ENCODE measurements at regions of chr19 and their contacts with region 1.

Region 1: DNA sequence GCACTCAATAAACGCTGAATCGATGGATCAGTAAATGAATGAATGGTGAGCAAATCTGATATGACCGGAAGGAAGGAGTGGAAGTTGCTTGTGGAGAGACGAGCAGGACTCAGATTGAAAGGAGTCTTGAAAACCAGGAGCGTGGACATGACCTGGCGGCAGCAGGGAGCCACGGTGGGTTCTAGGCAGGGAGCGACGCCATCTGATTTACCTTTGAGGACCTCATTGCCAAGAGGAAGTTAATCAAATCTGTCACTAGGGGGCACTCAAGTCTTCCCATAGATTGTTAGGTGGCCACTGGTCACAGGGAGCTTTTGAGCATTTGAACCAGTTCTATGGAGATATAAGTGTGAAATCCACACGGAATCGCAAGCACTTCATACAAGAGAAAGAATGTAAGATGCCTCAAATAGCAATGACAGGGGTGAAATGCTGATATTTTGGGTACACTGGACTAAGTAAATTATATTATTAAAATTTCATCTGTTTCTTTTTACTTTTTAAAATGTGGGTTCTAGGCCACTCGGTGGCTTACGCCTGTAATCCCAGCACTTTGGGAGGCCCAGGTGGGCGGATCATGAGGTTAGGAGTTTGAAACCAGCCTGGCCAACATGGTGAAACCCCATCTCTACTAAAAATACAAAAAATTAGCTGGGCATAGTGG is 9.2 kb upstream of the FBN3 start:
- H3K4me3 ChIP-seq: no peak overlapping the region
- H3K27ac ChIP-seq: no peak overlapping the region
- H3K4me1 ChIP-seq: peaks cover 4% of the 10 kb centered on the region
- CTCF ChIP-seq: peak; percentile 38; the same call in 1 of the 2 replicates

Region 2: DNA sequence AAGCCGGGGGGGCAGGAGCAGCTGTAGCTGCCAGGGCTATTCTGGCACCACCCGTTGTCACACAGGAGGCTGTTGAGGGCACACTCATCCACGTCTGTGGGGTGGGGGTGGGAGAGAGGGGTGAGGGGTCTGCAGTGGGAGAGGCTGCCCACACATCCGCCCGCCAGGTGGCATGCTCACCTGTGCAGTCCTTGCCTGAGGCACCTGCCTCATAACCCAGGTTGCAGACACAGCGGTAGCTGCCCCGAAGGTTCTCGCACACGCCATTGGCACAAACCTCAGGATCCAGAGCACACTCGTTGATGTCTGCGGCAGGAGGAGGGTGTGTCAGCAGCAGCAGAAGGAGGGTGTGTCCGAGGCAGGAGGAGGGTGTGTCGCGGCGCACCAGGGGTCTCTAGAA is 29.5 kb before region 1 on chr19:
- CTCF ChIA-PET with region 1: no interaction called
- POLR2A ChIA-PET with region 1: no interaction called
- H3K4me3 ChIP-seq: no peak overlapping the region
- H3K27ac ChIP-seq: no peak overlapping the region
- H3K4me1 ChIP-seq: peaks cover 2% of the 10 kb centered on the region; the same call in 1 of the 2 replicates
- CTCF ChIP-seq: no peak

Region 3: GRCh38 chr19:8224394-8225145 is 66.0 kb after region 1 on chr19:
- CTCF ChIA-PET with region 1: no interaction called
- POLR2A ChIA-PET with region 1: no interaction called
- H3K4me3 ChIP-seq: no peak overlapping the region
- H3K27ac ChIP-seq: no peak overlapping the region
- H3K4me1 ChIP-seq: no peaks in the 10 kb centered on the region
- CTCF ChIP-seq: no peak

Region 4: DNA sequence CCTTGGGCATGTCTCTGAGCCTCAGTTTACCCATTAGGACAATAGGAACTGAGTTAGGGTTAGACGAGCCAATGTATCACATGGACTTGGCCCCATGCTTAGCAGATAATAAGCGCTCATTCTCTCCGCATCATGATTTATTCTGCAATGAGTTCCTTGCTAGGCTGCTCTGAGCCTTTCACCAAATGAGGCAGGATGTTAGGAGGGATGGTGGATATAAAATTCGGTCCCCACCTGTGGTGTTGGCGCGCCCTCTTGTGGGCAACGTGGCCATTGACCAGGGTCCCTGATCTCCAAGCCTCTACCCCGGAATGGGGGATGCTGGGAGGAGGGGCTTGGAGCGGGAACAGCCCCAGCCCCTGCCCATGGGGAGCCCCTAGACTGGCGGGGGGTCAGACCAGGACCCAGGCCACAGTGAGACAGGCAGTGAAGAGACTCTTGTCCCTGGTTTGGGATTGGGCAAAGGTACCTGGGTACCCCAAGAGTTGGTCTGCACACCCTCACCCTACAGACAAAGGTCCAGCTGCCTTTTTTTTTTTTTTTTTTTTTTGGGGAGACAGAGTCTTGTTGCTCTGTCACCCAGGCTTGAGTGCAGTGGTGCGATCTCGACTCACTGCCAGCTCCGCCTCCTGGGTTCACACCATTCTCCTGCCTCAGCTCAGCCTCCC is 94.5 kb after region 1 on chr19:
- CTCF ChIA-PET with region 1: interaction called, 17 read pairs
- POLR2A ChIA-PET with region 1: interaction called, 3 read pairs
- H3K4me3 ChIP-seq: no peak overlapping the region
- H3K27ac ChIP-seq: no peak overlapping the region
- H3K4me1 ChIP-seq: no peaks in the 10 kb centered on the region
- CTCF ChIP-seq: peak; percentile 90

Measured in HEK293 (cell line).